Activated B cell treated with CpG ODN at 0.5 μM for 24 hours (primary cell): ENCODE measurements at regions of chr4 and their contacts with region 1.

Region 1: GRCh38 chr4:10554694-10555093 is 97.5 kb upstream of the ZNF518B start:
- DNase-seq: no peak
- ATAC-seq: peak; percentile 72
- H3K4me3 Mint-ChIP-seq: no peak overlapping the region
- H3K27ac Mint-ChIP-seq: no peak overlapping the region
- H3K4me1 Mint-ChIP-seq: peaks cover 10% of the 10 kb centered on the region
- H3K27me3 Mint-ChIP-seq: no peaks in the 10 kb centered on the region
- CTCF ChIP-seq: no peak

Region 2: DNA sequence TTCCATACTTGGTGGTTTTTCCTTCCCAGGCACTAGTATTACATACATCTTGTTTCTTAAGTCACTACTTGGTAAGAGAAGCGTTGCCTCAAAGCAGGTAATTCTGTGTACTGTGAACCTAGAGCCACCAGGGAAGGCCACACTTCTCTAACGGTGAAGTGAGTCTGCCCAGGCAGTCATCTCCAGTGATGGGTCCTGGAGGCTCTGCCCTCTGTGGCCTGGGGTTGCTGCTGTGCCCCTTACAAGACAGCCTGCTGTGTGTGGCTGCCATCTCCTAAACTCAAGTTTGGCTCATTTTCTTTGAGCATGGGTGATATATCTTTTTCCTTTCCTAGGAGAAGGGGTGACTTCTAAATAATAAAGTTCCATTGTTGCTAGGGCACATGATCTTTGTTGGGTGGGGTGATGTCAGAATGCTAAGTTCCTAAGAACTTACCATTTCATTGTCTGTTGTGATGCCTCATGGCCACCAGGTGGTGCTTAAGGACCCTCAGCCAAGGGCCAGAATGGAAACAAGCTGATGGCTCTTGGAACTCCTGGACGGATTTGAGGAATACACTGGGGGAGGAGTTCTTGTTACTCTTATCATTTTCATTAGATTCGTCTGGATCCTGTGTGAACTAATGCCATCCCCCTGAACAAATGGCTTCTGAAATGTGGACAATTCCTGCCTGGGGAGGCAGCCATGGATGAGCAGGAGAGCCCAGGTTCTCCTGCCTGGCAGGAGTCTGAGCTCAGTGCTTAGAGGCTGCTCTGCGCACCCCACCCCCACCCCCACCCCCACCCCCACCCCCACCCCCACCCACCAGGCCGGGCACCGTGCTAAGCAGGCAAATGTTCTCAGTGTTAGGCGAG is 397.0 kb before region 1 on chr4:
- CTCF ChIA-PET with region 1: interaction called, 3 read pairs
- POLR2A ChIA-PET with region 1: no interaction called
- intact Hi-C with region 1: loop called (anchors 1 kb)
- DNase-seq: no peak
- ATAC-seq: peak; percentile 79
- H3K4me3 Mint-ChIP-seq: no peak overlapping the region
- H3K27ac Mint-ChIP-seq: no peak overlapping the region
- H3K4me1 Mint-ChIP-seq: peaks cover 2% of the 10 kb centered on the region
- H3K27me3 Mint-ChIP-seq: peaks cover 24% of the 10 kb centered on the region
- CTCF ChIP-seq: no peak

Region 3: GRCh38 chr4:11623726-11624037 is 1069.0 kb after region 1 on chr4:
- CTCF ChIA-PET with region 1: interaction called, 5 read pairs
- POLR2A ChIA-PET with region 1: no interaction called
- intact Hi-C with region 1: loop called (anchors 10 kb)
- DNase-seq: no peak
- ATAC-seq: no peak
- H3K4me3 Mint-ChIP-seq: no peak overlapping the region
- H3K27ac Mint-ChIP-seq: no peak overlapping the region
- H3K4me1 Mint-ChIP-seq: peaks cover 4% of the 10 kb centered on the region
- H3K27me3 Mint-ChIP-seq: no peaks in the 10 kb centered on the region
- CTCF ChIP-seq: no peak

Region 4: DNA sequence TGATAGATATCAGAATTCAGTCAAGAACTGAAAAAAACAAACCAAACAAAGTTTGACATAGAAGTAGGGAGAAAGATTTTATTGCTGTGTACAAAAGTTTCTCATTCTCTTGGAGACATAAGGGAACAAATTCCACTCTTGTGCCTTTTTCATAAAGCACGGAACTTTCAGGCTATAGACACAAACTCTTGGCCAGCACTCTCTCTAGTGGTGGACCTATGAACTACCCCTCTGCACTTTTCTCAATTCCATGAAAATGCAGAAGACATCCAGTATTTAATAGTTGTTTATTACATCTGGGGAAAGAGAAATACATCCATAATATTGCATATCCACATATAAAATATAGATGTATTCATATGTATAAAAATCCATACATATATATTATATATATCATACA is 1165.6 kb after region 1 on chr4:
- CTCF ChIA-PET with region 1: interaction called, 3 read pairs
- POLR2A ChIA-PET with region 1: no interaction called
- intact Hi-C with region 1: loop called (anchors 1 kb)
- DNase-seq: no peak
- ATAC-seq: no peak
- H3K4me3 Mint-ChIP-seq: no peak overlapping the region
- H3K27ac Mint-ChIP-seq: no peak overlapping the region
- H3K4me1 Mint-ChIP-seq: no peaks in the 10 kb centered on the region
- H3K27me3 Mint-ChIP-seq: peaks cover 2% of the 10 kb centered on the region
- CTCF ChIP-seq: no peak